HepG2 (cell line): ENCODE measurements at regions of chr18 and their contacts with region 1.

Region 1: GRCh38 chr18:66571845-66572244 is 32.0 kb downstream of the CDH19 start:
- DNase-seq: no peak
- ATAC-seq: no peak
- H3K4me3 ChIP-seq: no peak overlapping the region
- H3K27ac ChIP-seq: no peak overlapping the region
- H3K4me1 ChIP-seq: no peaks in the 10 kb centered on the region
- H3K27me3 ChIP-seq: no peaks in the 10 kb centered on the region
- CTCF ChIP-seq: no peak
- EP300 ChIP-seq: no peak
- POLR2A ChIP-seq: no peak
- RAD21 ChIP-seq: no peak

Region 2: DNA sequence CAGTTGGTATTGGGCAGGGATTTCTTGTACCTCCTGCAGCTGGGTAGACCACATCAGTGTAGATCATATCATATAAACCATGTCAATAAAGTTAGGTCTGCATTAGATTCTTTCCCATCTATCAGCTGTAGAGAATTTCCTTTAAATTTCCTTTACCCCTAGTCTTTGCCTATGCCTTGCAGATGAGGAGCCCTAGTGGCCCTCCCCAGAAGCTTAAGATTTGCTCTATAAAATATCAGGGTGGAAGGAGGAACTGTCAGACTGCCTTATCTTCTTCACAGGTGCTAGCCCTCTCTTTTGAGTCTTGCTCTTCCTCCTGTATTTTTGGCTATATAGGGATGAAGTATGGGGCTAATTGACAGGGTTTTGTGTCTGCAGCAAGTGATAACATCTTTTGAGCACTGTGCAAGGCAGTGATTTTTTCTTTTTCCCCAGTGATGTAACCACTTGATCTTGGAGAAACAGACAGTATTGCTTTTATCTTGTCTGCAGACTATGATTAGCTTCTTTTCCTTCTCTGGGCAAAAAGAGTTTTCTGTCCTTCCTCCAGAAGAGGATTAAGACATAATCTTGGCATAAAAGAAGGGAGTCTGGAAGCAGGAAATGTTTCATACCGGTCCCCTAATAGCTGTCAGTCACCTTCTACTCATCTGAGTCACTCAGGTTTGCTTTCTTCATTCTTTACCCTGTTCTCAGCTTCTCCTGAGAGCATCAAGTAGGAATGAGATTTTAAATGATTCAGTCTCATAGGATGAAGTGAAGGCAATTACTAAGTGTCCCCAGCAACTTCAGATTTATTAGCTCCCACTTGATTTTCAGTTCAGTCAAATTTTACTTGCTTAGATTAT is 254.4 kb before region 1 on chr18:
- CTCF ChIA-PET with region 1: no interaction called
- POLR2A ChIA-PET with region 1: no interaction called
- in situ Hi-C with region 1: no loop called
- intact Hi-C with region 1: no loop called
- DNase-seq: no peak
- ATAC-seq: no peak
- H3K4me3 ChIP-seq: no peak overlapping the region
- H3K27ac ChIP-seq: no peak overlapping the region
- H3K4me1 ChIP-seq: no peaks in the 10 kb centered on the region
- H3K27me3 ChIP-seq: no peaks in the 10 kb centered on the region; a peak in 1 of 5 replicates
- CTCF ChIP-seq: no peak
- EP300 ChIP-seq: no peak
- POLR2A ChIP-seq: no peak
- RAD21 ChIP-seq: no peak

Region 3: DNA sequence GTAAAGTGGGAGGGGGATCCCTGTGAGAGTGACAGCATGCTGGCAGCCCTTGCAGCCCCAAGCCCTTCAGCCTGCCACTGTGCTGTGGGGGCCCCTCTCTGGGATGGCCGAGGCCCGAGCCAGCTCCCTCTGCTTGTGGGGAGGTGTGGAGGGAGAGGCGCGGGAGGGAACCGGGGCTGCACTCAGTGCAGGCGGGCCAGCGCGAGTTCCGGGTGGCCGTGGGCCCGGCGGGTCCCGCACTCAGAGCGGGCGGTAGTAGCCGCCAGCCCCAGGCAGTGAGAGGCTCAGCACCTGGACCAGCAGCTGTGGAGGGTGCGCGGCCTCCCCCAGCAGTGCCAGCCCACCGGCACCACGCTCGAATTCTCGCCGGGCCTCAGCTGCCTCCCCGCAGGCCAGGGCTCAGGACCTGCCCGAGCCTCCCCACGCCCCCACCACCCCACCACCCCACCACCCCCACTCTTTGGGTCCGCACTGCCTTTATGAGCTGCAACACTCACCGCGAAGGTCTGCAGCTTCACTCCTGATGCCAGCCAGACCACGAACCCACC is 176.1 kb before region 1 on chr18:
- CTCF ChIA-PET with region 1: no interaction called
- POLR2A ChIA-PET with region 1: no interaction called
- in situ Hi-C with region 1: no loop called
- intact Hi-C with region 1: no loop called
- DNase-seq: no peak
- ATAC-seq: no peak
- H3K4me3 ChIP-seq: no peak overlapping the region
- H3K27ac ChIP-seq: no peak overlapping the region
- H3K4me1 ChIP-seq: no peaks in the 10 kb centered on the region
- H3K27me3 ChIP-seq: no peaks in the 10 kb centered on the region
- CTCF ChIP-seq: no peak
- EP300 ChIP-seq: no peak
- POLR2A ChIP-seq: no peak
- RAD21 ChIP-seq: no peak

Region 4: DNA sequence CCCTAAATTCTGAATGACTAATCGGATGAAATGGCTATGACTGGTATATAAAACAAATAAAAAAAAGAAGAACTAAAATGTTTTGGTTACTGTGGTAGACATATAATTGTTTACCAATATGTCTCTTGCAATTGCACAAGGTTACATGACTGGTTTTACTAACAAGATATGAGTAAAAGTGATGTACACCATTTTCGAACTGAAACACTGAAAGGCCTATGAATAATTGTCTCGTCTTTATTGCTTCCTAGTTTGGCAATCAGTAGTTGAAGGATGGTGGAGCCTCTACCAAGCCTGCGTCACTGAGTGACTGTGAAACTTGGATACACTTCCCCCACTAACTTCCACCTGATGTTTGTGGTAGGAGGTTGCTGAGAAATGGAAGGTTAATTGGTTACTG is 15.6 kb after region 1 on chr18:
- CTCF ChIA-PET with region 1: no interaction called
- POLR2A ChIA-PET with region 1: no interaction called
- in situ Hi-C with region 1: no loop called
- intact Hi-C with region 1: loop called (anchors 2 kb)
- DNase-seq: no peak
- ATAC-seq: no peak
- H3K4me3 ChIP-seq: no peak overlapping the region
- H3K27ac ChIP-seq: no peak overlapping the region
- H3K4me1 ChIP-seq: no peaks in the 10 kb centered on the region
- H3K27me3 ChIP-seq: no peaks in the 10 kb centered on the region
- CTCF ChIP-seq: no peak
- EP300 ChIP-seq: no peak
- POLR2A ChIP-seq: no peak
- RAD21 ChIP-seq: no peak

Region 5: DNA sequence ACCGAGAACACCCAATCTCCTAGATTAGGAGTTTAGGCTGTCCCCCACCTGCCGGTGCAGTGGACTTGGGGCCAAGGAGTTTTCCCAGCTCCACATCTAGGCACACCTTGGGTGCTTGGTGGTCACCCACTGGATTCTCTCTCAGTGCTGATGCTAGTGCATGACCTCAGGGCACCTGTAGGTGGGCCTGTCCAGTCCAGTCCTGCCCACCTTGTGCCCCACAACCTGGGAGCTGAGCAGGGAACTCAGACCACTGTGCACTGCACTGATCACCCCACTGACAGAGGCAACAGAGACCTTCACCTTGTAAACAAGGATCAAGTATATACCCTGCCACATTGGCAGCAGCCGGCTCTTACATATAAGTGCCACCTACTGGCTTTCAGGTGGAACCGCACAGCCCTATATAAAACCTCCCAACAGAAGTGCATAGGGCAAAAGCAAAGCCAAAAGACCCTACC is 44.7 kb after region 1 on chr18:
- CTCF ChIA-PET with region 1: no interaction called
- POLR2A ChIA-PET with region 1: no interaction called
- in situ Hi-C with region 1: no loop called
- intact Hi-C with region 1: loop called (anchors 1 kb)
- DNase-seq: peak; percentile 35
- ATAC-seq: peak; percentile 99
- H3K4me3 ChIP-seq: no peak overlapping the region
- H3K27ac ChIP-seq: no peak overlapping the region
- H3K4me1 ChIP-seq: no peaks in the 10 kb centered on the region
- H3K27me3 ChIP-seq: no peaks in the 10 kb centered on the region
- CTCF ChIP-seq: peak; percentile 59
- EP300 ChIP-seq: no peak
- POLR2A ChIP-seq: no peak
- RAD21 ChIP-seq: no peak